ENCODE measurements at regions of chr10 and their contacts with region 1.

Region 1: GRCh38 chr10:11823122-11823988 is at the start of gene PROSER2:
- DNase-seq: peak in 1 of 2 experiments; percentile 76
- H3K4me3 ChIP-seq: peak within 1 kb of the TSS; percentile 70 to 96 (median 71)
- H3K27ac ChIP-seq: no peak within 1 kb of the TSS; the same call in 1 of the 2 replicates
- H3K4me1 ChIP-seq: no peaks in the 10 kb centered on the region
- H3K27me3 ChIP-seq: peaks cover 0 to 3% (median 0%) of the 10 kb centered on the region in 4 experiments; a peak in 2 of 7 replicates
- CTCF ChIP-seq: peak in 2 of 3 experiments; percentile 7 to 13; a peak in 2 of 4 replicates
- EP300 ChIP-seq: no peak
- POLR2A ChIP-seq: peak in 1 of 2 experiments; percentile 26; a peak in 1 of 3 replicates
- RAD21 ChIP-seq: no peak
- total RNA-seq, gene PROSER2: 11.6 and 13.7 TPM in 2 replicates

Region 2: DNA sequence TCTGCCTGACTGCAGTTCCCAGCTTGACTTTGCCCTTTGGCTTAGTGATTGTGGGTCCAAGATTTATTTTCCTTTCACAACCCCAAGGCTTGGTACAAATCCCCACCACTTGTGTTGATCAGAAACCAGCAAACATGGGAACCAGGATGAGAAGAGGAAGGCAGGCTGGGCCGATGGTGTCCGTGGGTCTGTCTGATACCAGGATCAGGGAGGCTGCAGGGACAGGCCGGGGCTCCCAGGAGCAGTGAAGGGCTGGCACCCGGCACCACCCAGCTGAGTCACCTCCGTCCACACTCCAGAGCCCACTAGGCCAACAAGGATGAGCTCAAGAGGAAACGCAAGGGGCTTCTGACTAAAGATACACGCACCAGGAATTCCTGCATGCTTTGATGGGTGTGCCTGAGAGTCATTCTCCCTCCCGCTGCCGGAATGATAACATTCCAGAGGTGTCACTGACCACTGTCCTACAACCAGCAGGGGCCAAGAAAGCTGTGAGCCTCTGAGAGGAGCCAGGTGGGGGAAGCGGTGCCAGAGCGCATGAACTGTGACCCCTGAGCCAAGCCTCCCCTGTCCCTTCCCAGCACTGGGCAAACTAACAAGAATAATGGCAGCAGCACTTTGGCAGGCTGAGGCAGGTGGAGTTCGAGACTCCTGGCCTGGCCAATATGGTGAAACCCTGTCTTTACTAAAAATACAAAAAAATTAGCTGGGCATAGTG is 29.4 kb before region 1 on chr10:
- CTCF ChIA-PET with region 1: interaction called, 55 read pairs
- POLR2A ChIA-PET with region 1: no interaction called
- DNase-seq: no peak
- H3K4me3 ChIP-seq: no peak overlapping the region
- H3K27ac ChIP-seq: no peak overlapping the region
- H3K4me1 ChIP-seq: peaks cover 0 to 3% (median 0%) of the 10 kb centered on the region in 4 experiments; a peak in 1 of 7 replicates
- H3K27me3 ChIP-seq: no peaks in the 10 kb centered on the region
- CTCF ChIP-seq: no peak
- EP300 ChIP-seq: no peak
- POLR2A ChIP-seq: no peak
- RAD21 ChIP-seq: no peak

Region 3: GRCh38 chr10:11810313-11810766 is 13.0 kb before region 1 on chr10:
- CTCF ChIA-PET with region 1: interaction called, 28 read pairs
- POLR2A ChIA-PET with region 1: interaction called, 3 read pairs
- DNase-seq: no peak
- H3K4me3 ChIP-seq: no peak overlapping the region
- H3K27ac ChIP-seq: no peak overlapping the region
- H3K4me1 ChIP-seq: peaks cover 0 to 7% (median under 1%) of the 10 kb centered on the region in 4 experiments; a peak in 2 of 7 replicates
- H3K27me3 ChIP-seq: no peaks in the 10 kb centered on the region
- CTCF ChIP-seq: no peak
- EP300 ChIP-seq: no peak
- POLR2A ChIP-seq: no peak
- RAD21 ChIP-seq: no peak

Region 4: GRCh38 chr10:11846542-11846941 is 23.2 kb after region 1 on chr10:
- CTCF ChIA-PET with region 1: interaction called, 15 read pairs
- POLR2A ChIA-PET with region 1: no interaction called
- DNase-seq: no peak
- H3K4me3 ChIP-seq: no peak overlapping the region
- H3K27ac ChIP-seq: no peak overlapping the region
- H3K4me1 ChIP-seq: no peaks in the 10 kb centered on the region
- H3K27me3 ChIP-seq: no peaks in the 10 kb centered on the region
- CTCF ChIP-seq: no peak
- EP300 ChIP-seq: no peak
- POLR2A ChIP-seq: no peak
- RAD21 ChIP-seq: no peak

Region 5: GRCh38 chr10:12214763-12215218 is 391.4 kb after region 1 on chr10:
- CTCF ChIA-PET with region 1: no interaction called
- POLR2A ChIA-PET with region 1: no interaction called
- DNase-seq: no peak
- H3K4me3 ChIP-seq: no peak overlapping the region
- H3K27ac ChIP-seq: no peak overlapping the region
- H3K4me1 ChIP-seq: no peaks in the 10 kb centered on the region
- H3K27me3 ChIP-seq: no peaks in the 10 kb centered on the region
- CTCF ChIP-seq: peak in 2 of 3 experiments; percentile 15 to 49; a peak in 2 of 4 replicates
- EP300 ChIP-seq: no peak
- POLR2A ChIP-seq: no peak
- RAD21 ChIP-seq: peak in 1 of 2 experiments; percentile 13; a peak in 2 of 4 replicates

Measured in H1 (cell line).